Heart left ventricle (tissue), 16 donors: ENCODE measurements at regions of chr5 and their contacts with region 1.

Region 1: GRCh38 chr5:172479044-172479783 is 24.9 kb upstream of the SH3PXD2B start:
- DNase-seq: peak; percentile 88 to 93 (median 89)
- ATAC-seq: peak; percentile 88 to 97 (median 96)
- H3K4me3 ChIP-seq: peak overlapping the region in 7 of 12 donors; percentile 8 to 39 (median 23)
- H3K27ac ChIP-seq: peak overlapping the region in 11 of 12 donors; percentile 31 to 81 (median 72)
- H3K4me1 ChIP-seq: peaks cover 0 to 27% (median 12%) of the 10 kb centered on the region in 12 donors
- H3K27me3 ChIP-seq: no peaks in the 10 kb centered on the region
- CTCF ChIP-seq: peak; percentile 75 to 97 (median 89)
- POLR2A ChIP-seq: no peak

Region 2: GRCh38 chr5:172932313-172933017 is 453.3 kb after region 1 on chr5:
- intact Hi-C with region 1: loop called in 5 of 10 experiments (anchors 5 to 10 kb)
- DNase-seq: peak; percentile 76 to 90 (median 78)
- ATAC-seq: peak; percentile 65 to 89 (median 84)
- H3K4me3 ChIP-seq: no peak overlapping the region
- H3K27ac ChIP-seq: peak overlapping the region in 11 of 12 donors; percentile 1 to 80 (median 72)
- H3K4me1 ChIP-seq: peaks cover 0 to 25% (median 18%) of the 10 kb centered on the region in 12 donors
- H3K27me3 ChIP-seq: no peaks in the 10 kb centered on the region
- CTCF ChIP-seq: peak; percentile 91 to 99 (median 96)
- POLR2A ChIP-seq: no peak

Region 3: GRCh38 chr5:172939071-172939470 is 459.9 kb after region 1 on chr5:
- intact Hi-C with region 1: loop called in 6 of 10 experiments (anchors 5 to 10 kb)
- DNase-seq: peak in 2 of 5 donors; percentile 39 to 44
- ATAC-seq: peak in 3 of 4 donors; percentile 33 to 49 (median 40)
- H3K4me3 ChIP-seq: no peak overlapping the region
- H3K27ac ChIP-seq: peak overlapping the region in 2 of 12 donors; percentile 7 to 20
- H3K4me1 ChIP-seq: peaks cover 0 to 15% (median 0%) of the 10 kb centered on the region in 12 donors
- H3K27me3 ChIP-seq: no peaks in the 10 kb centered on the region
- CTCF ChIP-seq: peak in 8 of 12 donors; percentile 7 to 41 (median 29)
- POLR2A ChIP-seq: no peak